HEK293 (cell line): ENCODE measurements at regions of chr17 and their contacts with region 1.

Region 1: DNA sequence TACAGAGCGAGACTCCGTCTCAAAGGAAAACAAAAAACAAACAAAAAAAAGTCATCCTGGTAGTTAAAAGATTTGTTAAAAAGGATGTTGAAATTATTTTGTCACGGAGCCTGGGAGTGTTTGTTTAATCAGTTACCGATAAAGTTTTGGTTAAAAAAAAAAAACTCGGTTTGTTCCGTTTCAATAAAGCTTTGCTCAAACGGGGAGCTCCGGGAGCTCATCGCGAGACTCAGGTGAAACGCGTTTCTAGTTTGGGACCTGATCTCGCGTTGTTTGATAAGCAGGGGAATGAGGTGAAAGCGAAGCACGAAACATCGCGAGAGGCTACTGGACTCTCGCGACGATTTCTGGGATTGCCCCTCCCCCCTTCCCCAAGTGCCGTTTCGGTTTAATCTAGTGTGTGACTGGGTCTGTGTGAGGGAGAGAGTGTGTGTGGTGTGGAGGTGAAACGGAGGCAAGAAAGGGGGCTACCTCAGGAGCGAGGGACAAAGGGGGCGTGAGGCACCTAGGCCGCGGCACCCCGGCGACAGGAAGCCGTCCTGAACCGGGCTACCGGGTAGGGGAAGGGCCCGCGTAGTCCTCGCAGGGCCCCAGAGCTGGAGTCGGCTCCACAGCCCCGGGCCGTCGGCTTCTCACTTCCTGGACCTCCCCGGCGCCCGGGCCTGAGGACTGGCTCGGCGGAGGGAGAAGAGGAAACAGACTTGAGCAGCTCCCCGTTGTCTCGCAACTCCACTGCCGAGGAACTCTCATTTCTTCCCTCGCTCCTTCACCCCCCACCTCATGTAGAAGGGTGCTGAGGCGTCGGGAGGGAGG is at the start of gene CDK12:
- H3K4me3 ChIP-seq: peak within 1 kb of the TSS; percentile 78
- H3K27ac ChIP-seq: peak within 1 kb of the TSS; percentile 91
- H3K4me1 ChIP-seq: no peaks in the 10 kb centered on the region
- CTCF ChIP-seq: no peak

Region 2: DNA sequence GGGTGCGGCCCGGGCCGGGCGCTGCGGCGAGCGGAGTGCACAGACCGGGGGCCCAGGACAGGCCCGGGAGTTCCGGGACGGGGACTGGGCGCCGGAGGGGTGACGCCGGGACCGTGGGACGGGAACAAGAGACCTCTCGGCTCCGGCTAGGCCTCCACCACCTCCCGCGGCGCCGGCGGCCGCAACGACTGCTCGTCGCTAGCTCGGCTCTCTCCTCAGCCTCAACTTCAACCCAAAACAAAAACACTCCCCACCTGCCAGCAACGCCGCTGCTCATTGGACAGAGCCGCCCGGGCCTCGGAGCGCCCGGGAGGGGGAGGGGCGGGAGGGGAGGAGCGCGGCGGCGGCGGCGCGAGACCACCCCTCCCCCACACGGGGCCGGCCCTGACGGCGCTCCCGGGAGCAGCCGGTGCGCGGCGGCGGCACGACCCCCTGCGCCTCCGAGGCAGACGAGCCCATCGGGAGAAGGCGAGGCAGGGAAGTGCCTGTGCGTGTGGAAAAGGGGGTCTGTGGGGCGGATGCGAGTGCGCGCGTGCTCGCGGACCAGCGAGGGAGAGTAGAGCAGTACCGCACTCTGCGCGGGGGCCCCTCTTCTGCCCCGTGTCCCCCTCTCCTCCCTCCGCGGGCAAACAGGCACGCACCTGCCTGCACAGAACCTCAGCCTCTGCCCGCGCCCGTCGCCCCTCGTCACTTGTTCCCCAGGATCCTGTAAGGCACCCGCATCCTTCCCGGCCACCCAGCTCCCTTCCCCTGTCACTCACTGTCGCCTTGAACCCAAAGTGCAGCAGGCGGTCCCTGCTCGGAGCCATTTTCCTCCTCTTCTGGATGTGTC is 59.7 kb before region 1 on chr17 and contains the start of gene FBXL20:
- CTCF ChIA-PET with region 1: no interaction called
- POLR2A ChIA-PET with region 1: interaction called, 20 read pairs
- H3K4me3 ChIP-seq: peak within 1 kb of the TSS; percentile 99
- H3K27ac ChIP-seq: peak within 1 kb of the TSS; percentile 93
- H3K4me1 ChIP-seq: peaks cover 17% of the 10 kb centered on the region; the same call in 1 of the 2 replicates
- CTCF ChIP-seq: peak; percentile 37; the same call in 1 of the 2 replicates

Region 3: GRCh38 chr17:39450847-39451581 is 10.3 kb before region 1 on chr17 and contains the start of gene MED1:
- CTCF ChIA-PET with region 1: interaction called, 4 read pairs
- POLR2A ChIA-PET with region 1: interaction called, 131 read pairs
- H3K4me3 ChIP-seq: peak within 1 kb of the TSS; percentile 84
- H3K27ac ChIP-seq: peak within 1 kb of the TSS; percentile 83
- H3K4me1 ChIP-seq: no peaks in the 10 kb centered on the region
- CTCF ChIP-seq: no peak

Region 4: DNA sequence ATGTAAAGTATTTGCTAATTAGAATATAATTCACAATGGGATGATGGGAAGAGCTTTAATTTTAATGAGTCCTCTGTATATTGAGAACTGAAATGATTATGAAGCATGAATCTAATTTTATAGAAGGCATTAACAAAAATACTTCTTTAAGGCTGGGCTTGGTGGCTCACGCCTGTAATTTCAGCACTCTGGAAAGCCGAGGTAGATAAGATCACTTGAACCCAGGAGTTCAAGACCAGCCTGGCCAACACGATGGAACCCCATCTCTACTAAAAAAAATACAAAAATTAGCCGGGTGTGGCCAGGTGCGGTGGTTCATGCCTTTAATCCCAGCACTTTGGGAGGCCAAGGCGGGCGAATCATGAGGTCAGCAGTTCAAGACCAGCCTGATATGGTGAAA is 12.0 kb after region 1 on chr17:
- CTCF ChIA-PET with region 1: interaction called, 4 read pairs
- POLR2A ChIA-PET with region 1: interaction called, 15 read pairs
- H3K4me3 ChIP-seq: no peak overlapping the region
- H3K27ac ChIP-seq: no peak overlapping the region
- H3K4me1 ChIP-seq: no peaks in the 10 kb centered on the region
- CTCF ChIP-seq: no peak

Region 5: DNA sequence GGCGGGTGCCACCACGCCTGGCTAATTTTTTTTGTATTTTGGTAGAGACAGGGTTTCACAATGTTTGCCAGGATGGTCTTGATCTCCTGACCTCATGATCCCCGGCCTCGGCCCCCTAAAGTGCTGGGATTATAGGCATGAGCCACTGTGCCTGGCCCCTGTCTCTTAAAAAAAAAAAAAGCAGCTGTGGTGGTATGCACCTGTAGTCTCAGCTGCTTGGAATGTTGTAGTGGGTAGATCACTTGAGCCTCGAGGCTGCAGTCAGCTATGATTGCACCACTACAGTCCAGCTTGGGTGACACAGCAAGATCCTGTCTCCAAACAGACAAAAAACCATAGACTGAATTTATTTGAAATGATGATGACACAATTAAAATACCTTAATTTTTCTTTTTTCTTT is 24.2 kb after region 1 on chr17:
- CTCF ChIA-PET with region 1: interaction called, 3 read pairs
- POLR2A ChIA-PET with region 1: interaction called, 21 read pairs
- H3K4me3 ChIP-seq: no peak overlapping the region
- H3K27ac ChIP-seq: 0 out of 2 replicates have a peak overlapping the region, but pooled peaks have one; percentile 49
- H3K4me1 ChIP-seq: 0 out of 2 replicates have a peak, but pooled peaks cover 3% of the 10 kb centered on the region
- CTCF ChIP-seq: no peak